Dendritic cell treated with granulocyte-macrophage colony-stimulating factor and Interleukin-4, amounts not matched to agents 40 ng/mL and 50 ng/mL, for 4 days (primary cell): ENCODE measurements at regions of chr14 and their contacts with region 1.

Region 1: GRCh38 chr14:35121887-35122695 is at the starts of genes PPP2R3C and PRORP:
- H3K4me3 Mint-ChIP-seq: peak within 1 kb of the TSS; percentile 90
- H3K27ac Mint-ChIP-seq: peak within 1 kb of the TSS; percentile 99
- H3K4me1 Mint-ChIP-seq: peaks cover 60% of the 10 kb centered on the region
- H3K27me3 Mint-ChIP-seq: no peaks in the 10 kb centered on the region

Region 2: GRCh38 chr14:34875031-34875922 is 246.8 kb before region 1 on chr14 and contains the start of gene BAZ1A:
- intact Hi-C with region 1: loop called (anchors 2 kb)
- H3K4me3 Mint-ChIP-seq: peak within 1 kb of the TSS; percentile 99
- H3K27ac Mint-ChIP-seq: peak within 1 kb of the TSS; percentile 100
- H3K4me1 Mint-ChIP-seq: peaks cover 15% of the 10 kb centered on the region
- H3K27me3 Mint-ChIP-seq: no peaks in the 10 kb centered on the region

Region 3: DNA sequence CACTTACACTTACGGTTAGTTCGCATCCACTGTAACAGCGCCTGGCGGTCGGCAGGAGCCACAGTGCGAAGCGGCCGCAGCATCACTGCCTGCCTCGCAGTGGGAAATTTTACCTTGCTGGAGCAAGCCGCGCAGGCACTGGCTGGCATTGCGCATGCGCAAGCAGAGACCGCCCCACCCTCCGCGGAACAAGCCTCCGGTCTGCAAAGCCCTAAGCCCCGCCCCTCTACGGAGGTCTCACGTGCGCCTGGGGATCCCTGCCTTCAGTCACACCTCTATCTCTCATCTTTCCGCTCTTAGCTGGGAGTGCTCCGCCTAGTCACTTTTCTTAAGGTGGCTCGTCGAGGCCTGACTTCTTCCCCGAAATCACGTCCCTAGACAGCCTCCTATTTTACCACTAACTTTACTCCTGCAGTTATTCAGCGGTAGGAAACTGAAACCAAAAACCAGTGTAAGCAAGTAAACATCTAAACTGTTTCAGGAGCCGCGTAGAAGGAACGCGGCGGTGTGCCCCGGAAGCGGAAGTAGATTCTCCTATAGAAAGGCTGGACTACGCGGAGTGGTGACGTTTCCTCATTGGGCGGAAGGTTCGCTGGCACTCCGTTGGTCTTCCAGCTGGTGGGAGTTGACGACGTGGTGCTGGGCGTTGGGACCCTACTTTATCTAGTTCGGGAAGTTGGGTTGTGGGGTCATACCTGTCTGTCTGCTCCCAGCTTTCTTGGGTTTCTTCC is 139.5 kb before region 1 on chr14 and contains the start of gene SRP54:
- intact Hi-C with region 1: loop called (anchors 2 kb)
- H3K4me3 Mint-ChIP-seq: no peak within 1 kb of the TSS
- H3K27ac Mint-ChIP-seq: no peak within 1 kb of the TSS
- H3K4me1 Mint-ChIP-seq: no peaks in the 10 kb centered on the region
- H3K27me3 Mint-ChIP-seq: no peaks in the 10 kb centered on the region

Region 4: GRCh38 chr14:35046048-35046741 is 75.9 kb before region 1 on chr14 and contains the start of gene FAM177A1:
- intact Hi-C with region 1: loop called (anchors 5 kb)
- H3K4me3 Mint-ChIP-seq: peak within 1 kb of the TSS; percentile 99
- H3K27ac Mint-ChIP-seq: peak within 1 kb of the TSS; percentile 98
- H3K4me1 Mint-ChIP-seq: peaks cover 38% of the 10 kb centered on the region
- H3K27me3 Mint-ChIP-seq: no peaks in the 10 kb centered on the region

Region 5: GRCh38 chr14:35247777-35248475 is 125.8 kb after region 1 on chr14:
- intact Hi-C with region 1: no loop called
- H3K4me3 Mint-ChIP-seq: no peak overlapping the region
- H3K27ac Mint-ChIP-seq: peak overlapping the region; percentile 47
- H3K4me1 Mint-ChIP-seq: peaks cover 39% of the 10 kb centered on the region
- H3K27me3 Mint-ChIP-seq: no peaks in the 10 kb centered on the region

Region 6: GRCh38 chr14:35292051-35292769 is 170.1 kb after region 1 on chr14 and contains the start of gene PSMA6:
- intact Hi-C with region 1: loop called (anchors 2 kb)
- H3K4me3 Mint-ChIP-seq: peak within 1 kb of the TSS; percentile 98
- H3K27ac Mint-ChIP-seq: peak within 1 kb of the TSS; percentile 92
- H3K4me1 Mint-ChIP-seq: peaks cover 51% of the 10 kb centered on the region
- H3K27me3 Mint-ChIP-seq: no peaks in the 10 kb centered on the region

Region 7: GRCh38 chr14:35404449-35405303 is 282.6 kb after region 1 on chr14 and contains the start of gene NFKBIA:
- intact Hi-C with region 1: loop called (anchors 5 kb)
- H3K4me3 Mint-ChIP-seq: peak within 1 kb of the TSS; percentile 99
- H3K27ac Mint-ChIP-seq: peak within 1 kb of the TSS; percentile 100
- H3K4me1 Mint-ChIP-seq: peaks cover 29% of the 10 kb centered on the region
- H3K27me3 Mint-ChIP-seq: no peaks in the 10 kb centered on the region